ENCODE measurements at regions of chr6 and their contacts with region 1.

Region 1: DNA sequence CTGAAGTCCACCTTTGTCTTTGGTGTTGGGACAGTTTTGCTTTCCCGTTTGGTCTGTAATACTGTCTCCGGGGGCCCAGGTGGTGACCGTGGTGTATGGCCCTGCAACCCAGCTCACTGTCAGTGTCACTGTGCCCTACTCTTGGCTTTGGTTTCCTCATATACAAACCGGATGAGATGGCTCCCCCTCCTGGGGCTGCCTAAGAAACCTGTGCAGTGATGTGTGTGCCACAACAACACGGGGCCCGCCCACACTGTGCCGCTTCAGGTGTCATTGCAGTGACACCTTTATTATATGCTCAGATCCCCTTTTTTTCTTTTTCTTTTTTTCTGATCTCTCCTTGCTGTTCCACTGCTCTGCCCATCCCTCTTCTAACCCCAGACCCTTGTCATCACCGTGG is 73.9 kb downstream of the RAMACL start:
- DNase-seq: peak in 4 of 9 donors; percentile 7 to 32 (median 30)
- ATAC-seq: peak; percentile 83
- H3K4me3 ChIP-seq: no peak overlapping the region
- H3K4me3 Mint-ChIP-seq: no peak overlapping the region
- H3K27ac ChIP-seq: no peak overlapping the region
- H3K27ac Mint-ChIP-seq: peak overlapping the region in 2 of 9 donors; percentile 10 to 28
- H3K4me1 ChIP-seq: peaks cover 0 to 4% of the 10 kb centered on the region in 2 donors
- H3K4me1 Mint-ChIP-seq: peaks cover 0 to 10% (median 6%) of the 10 kb centered on the region in 7 donors
- H3K27me3 ChIP-seq: no peaks in the 10 kb centered on the region
- H3K27me3 Mint-ChIP-seq: no peaks in the 10 kb centered on the region

Region 2: GRCh38 chr6:166313255-166314070 is 199.1 kb before region 1 on chr6:
- CTCF ChIA-PET with region 1: no interaction called
- POLR2A ChIA-PET with region 1: no interaction called
- intact Hi-C with region 1: loop called in 1 of 2 experiments (anchors 2 kb)
- DNase-seq: peak in 5 of 9 donors; percentile 28 to 55 (median 36)
- ATAC-seq: peak; percentile 98
- H3K4me3 ChIP-seq: no peak overlapping the region
- H3K4me3 Mint-ChIP-seq: no peak overlapping the region
- H3K27ac ChIP-seq: no peak overlapping the region
- H3K27ac Mint-ChIP-seq: no peak overlapping the region
- H3K4me1 ChIP-seq: no peaks in the 10 kb centered on the region
- H3K4me1 Mint-ChIP-seq: peaks cover 0 to 4% (median 0%) of the 10 kb centered on the region in 7 donors
- H3K27me3 ChIP-seq: peaks cover 0 to under 1% of the 10 kb centered on the region in 2 donors
- H3K27me3 Mint-ChIP-seq: peaks cover 13 to 42% (median 18%) of the 10 kb centered on the region in 5 donors

Region 3: GRCh38 chr6:166435574-166435973 is 77.0 kb before region 1 on chr6:
- CTCF ChIA-PET with region 1: no interaction called
- POLR2A ChIA-PET with region 1: no interaction called
- intact Hi-C with region 1: loop called in 1 of 2 experiments (anchors 1 kb)
- DNase-seq: peak in 5 of 9 donors; percentile 26 to 50 (median 27)
- ATAC-seq: peak; percentile 84
- H3K4me3 ChIP-seq: no peak overlapping the region
- H3K4me3 Mint-ChIP-seq: peak overlapping the region in 5 of 10 donors; percentile 17 to 60 (median 48)
- H3K27ac ChIP-seq: no peak overlapping the region
- H3K27ac Mint-ChIP-seq: peak overlapping the region in 7 of 9 donors; percentile 62 to 96 (median 83)
- H3K4me1 ChIP-seq: peaks cover 15 to 19% of the 10 kb centered on the region in 2 donors
- H3K4me1 Mint-ChIP-seq: peaks cover 14 to 43% (median 23%) of the 10 kb centered on the region in 7 donors
- H3K27me3 ChIP-seq: no peaks in the 10 kb centered on the region
- H3K27me3 Mint-ChIP-seq: peaks cover 0 to 8% (median 0%) of the 10 kb centered on the region in 5 donors

Region 4: GRCh38 chr6:166456395-166457156 is 56.0 kb before region 1 on chr6:
- CTCF ChIA-PET with region 1: interaction called, 5 read pairs
- POLR2A ChIA-PET with region 1: no interaction called
- intact Hi-C with region 1: loop called in 1 of 2 experiments (anchors 1 kb)
- DNase-seq: peak in 2 of 9 donors; percentile 18 to 33
- ATAC-seq: peak; percentile 16
- H3K4me3 ChIP-seq: no peak overlapping the region
- H3K4me3 Mint-ChIP-seq: no peak overlapping the region
- H3K27ac ChIP-seq: no peak overlapping the region
- H3K27ac Mint-ChIP-seq: peak overlapping the region in 1 of 9 donors; percentile 84
- H3K4me1 ChIP-seq: no peaks in the 10 kb centered on the region
- H3K4me1 Mint-ChIP-seq: peaks cover 0 to 5% (median 0%) of the 10 kb centered on the region in 7 donors
- H3K27me3 ChIP-seq: no peaks in the 10 kb centered on the region
- H3K27me3 Mint-ChIP-seq: no peaks in the 10 kb centered on the region

Region 5: DNA sequence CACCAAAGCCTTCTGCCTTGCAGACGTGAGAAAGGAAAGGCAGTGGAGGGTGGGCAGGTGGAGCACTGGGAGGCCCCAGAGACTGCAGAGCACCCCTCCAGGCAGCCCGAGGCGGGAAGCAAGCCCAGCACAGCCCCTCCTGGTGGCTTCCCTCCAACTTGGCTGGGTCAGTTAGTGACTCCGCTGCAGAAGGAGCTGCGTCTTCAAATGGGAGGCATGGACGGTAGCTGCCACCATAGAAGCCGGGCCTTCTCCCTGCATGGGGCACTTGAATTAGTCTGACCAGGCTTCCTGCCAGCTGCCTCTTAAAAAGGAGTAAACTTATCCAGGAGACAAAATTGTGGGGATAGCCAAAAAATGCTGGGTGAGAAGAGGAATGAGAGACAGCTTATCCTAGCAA is 202.5 kb after region 1 on chr6:
- CTCF ChIA-PET with region 1: no interaction called
- POLR2A ChIA-PET with region 1: no interaction called
- intact Hi-C with region 1: no loop called
- DNase-seq: no peak
- ATAC-seq: no peak
- H3K4me3 ChIP-seq: no peak overlapping the region
- H3K4me3 Mint-ChIP-seq: no peak overlapping the region
- H3K27ac ChIP-seq: no peak overlapping the region
- H3K27ac Mint-ChIP-seq: no peak overlapping the region
- H3K4me1 ChIP-seq: no peaks in the 10 kb centered on the region
- H3K4me1 Mint-ChIP-seq: no peaks in the 10 kb centered on the region
- H3K27me3 ChIP-seq: no peaks in the 10 kb centered on the region
- H3K27me3 Mint-ChIP-seq: peaks cover 0 to 8% (median 0%) of the 10 kb centered on the region in 5 donors

Measured in naive thymus-derived CD4-positive, alpha-beta T cell (primary cell).